ENCODE measurements at regions of chr10 and their contacts with region 1.

Region 1: DNA sequence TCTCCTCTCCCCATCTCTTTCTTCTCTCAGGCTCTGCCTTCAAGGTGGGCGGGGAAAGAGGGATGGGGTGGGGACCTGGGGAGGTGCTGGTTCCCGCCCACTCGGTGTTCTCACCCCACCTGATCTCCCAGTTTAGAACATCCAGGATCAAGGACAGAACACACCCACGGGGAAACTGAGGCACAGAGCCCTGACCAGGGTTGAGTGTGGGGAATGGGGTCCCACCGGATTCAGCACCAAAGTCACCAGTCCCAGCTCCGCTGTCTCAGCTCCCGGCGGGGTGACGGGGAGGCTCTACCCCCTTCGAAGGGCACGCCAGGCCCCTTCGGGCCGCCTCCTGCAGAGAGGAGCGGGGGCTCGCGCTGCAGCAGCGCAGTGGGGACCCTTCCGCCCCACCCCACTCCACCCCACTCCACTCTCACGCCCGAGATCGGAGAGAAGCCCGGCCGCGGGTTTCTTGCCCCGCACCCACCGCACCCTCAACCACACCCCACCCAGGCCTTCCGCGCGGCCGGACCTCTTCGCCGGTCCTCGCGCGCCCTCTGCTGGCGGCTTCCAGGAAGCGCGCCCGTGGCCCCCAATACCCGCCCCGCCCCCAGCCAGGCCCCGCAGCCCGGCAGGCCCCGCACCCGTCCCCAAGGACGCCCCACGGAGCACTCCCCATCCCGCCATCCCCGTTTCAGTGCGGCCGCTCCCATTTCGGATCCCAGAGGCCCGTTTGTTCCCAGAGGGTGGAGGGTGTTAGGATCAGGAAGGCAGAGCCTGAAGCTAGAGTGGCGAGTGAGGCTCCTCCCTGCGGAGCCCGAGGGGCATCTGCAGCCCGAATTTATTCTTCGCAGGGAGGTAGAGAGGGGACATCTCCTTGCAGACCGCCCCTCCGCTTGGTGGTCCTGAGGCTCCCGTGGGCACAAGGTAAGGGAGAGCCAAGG is 18.0 kb downstream of the POLL start:
- DNase-seq: peak; percentile 93

Region 2: GRCh38 chr10:99732033-99732912 is 1837.8 kb before region 1 on chr10 and contains the starts of genes COX15 and CUTC:
- intact Hi-C with region 1: no loop called
- DNase-seq: peak; percentile 99
- total RNA-seq, gene COX15: 17.6 to 24.3 TPM
- total RNA-seq, gene CUTC: 22.6 to 25.7 TPM

Region 3: GRCh38 chr10:101214446-101215396 is 355.4 kb before region 1 on chr10:
- intact Hi-C with region 1: loop called (anchors 5 kb)
- DNase-seq: peak; percentile 92

Region 4: DNA sequence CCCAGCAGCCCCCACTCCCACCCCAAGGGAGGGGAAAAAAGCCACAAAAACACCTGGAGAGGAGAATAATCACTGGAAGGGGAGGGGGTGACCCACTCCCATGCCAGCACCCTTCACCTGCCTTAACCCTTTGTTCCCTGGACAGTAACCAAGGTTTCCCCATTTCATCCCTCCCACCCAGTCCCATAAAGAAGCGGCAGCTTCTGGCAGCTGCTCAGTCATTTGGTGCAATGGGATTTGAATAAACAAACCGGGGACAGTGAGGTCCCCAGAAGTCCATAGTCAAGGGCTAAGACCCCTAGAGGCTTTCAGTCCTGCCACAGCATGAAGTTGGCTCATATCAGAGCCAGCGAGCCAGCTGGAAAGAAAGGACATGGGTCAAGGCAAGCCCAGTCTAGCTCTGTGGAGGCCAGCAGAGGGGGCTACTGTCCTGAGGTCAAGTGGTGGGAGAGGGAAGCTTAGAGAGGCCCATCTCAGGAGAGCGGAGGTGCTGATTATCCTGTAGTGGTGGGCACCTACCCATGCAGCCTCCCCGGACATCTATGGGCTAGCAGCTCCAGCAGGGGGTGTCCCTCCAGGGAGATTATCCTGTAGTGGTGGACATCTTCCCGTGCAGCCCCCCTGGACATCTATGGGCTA is 282.0 kb before region 1 on chr10:
- intact Hi-C with region 1: loop called in 1 of 2 experiments (anchors 10 kb)
- DNase-seq: no peak

Region 5: GRCh38 chr10:101671453-101671852 is 101.4 kb after region 1 on chr10:
- intact Hi-C with region 1: no loop called
- DNase-seq: no peak

Measured in posterior vena cava (tissue), 2 donors.